H1 (cell line): ENCODE measurements at regions of chr17 and their contacts with region 1.

Region 1: DNA sequence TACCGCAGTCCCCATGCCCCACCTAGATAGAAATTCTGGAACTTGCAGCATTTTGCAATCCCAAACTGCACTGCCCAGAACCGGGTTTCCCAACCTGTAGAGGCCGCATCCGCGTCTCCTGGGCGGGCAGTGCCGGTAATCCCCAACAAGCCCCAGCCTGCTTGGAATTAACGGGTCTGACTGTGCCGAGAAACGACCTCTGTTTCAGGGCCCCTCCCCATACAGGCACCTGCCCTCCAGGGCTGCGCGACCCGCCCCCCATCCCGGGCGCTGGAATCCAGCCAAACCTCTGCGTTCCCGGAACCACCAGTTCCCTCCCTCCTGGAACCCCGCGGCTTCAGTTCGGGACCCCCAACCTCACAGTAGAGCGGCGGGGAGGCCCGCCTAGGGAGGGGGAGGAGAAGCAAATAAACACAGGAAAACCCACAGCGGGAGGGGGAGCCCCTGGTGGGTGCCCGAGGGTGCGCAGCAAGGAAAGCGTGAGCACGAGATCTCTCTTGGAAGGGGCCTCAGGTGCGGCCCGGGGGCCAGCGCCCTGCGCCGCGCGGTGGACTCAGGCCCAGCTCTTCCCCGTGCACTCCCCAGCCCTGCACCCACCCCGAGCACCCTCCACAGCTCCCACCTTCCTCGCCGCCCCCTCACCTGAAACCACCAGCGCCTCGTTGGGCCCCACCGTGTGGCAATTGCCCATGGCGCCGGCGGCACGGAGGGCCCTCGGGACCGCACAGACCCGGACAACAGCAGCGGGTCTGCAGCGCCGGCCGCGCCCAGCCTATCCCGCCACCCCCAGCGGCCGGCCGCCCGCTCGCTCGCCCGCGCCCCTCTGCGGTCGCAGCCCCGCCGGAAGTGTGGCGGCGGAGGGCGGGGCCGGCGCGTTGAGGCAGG is at the start of gene FLOT2:
- DNase-seq: peak; percentile 38 to 83
- H3K4me3 ChIP-seq: peak within 1 kb of the TSS; percentile 79 to 94 (median 89)
- H3K27ac ChIP-seq: peak within 1 kb of the TSS; percentile 68; the same call in 1 of the 2 replicates
- H3K4me1 ChIP-seq: peaks cover 2 to 18% (median 8%) of the 10 kb centered on the region in 4 experiments
- H3K27me3 ChIP-seq: no peaks in the 10 kb centered on the region
- CTCF ChIP-seq: peak in 2 of 3 experiments; percentile 14 to 33; a peak in 3 of 4 replicates
- EP300 ChIP-seq: no peak; a peak in 1 of 3 replicates
- POLR2A ChIP-seq: peak; percentile 56 to 75; a peak in 2 of 3 replicates
- RAD21 ChIP-seq: no peak
- total RNA-seq, gene FLOT2: 116 and 121 TPM in 2 replicates

Region 2: DNA sequence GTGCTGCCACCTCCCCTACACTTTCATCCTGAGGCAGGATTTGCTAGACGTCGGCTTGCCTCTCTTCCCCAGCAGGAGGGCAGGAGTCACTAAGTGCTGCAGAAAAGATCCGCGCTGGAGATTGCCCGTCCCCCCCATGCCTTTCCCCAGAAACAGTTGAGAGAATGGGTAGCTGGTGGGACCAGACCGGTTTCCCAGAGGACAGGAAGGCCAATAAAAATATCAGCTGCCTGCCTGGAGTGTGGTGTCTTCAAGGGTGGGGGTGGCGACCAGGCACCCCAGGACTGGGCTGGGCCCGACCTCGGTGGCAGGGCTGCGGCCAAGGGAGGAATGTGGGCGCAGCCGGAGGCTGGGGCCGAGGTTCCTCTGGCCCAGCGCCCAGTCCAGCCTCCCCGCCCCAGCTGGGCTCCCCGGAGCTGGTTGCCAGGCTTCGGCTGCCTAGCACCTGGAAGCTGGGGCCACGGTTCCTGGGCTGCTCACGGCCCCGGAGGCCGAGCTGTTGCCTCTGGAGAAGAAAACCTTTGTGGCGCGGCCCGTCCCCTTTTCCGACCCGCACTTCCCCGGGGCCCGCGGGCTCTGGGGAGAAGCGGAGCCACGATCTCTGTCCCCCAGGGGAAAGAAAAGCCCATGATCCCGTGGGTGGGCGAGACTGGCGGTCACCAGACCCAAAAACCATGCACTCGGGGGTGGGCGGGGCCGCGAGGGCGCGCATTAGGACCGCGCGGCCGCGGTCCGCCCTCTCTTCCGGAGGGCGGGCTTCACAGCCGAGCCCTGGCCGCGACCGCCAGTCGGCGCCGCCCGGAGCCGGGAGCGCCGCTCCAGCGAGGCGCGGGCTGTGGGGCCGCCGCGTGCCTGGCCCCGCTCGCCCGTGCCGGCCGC is 153.7 kb before region 1 on chr17 and contains the start of gene TRAF4:
- CTCF ChIA-PET with region 1: interaction called, 3 read pairs
- POLR2A ChIA-PET with region 1: interaction called, 18 read pairs
- DNase-seq: peak in 1 of 2 experiments; percentile 87
- H3K4me3 ChIP-seq: peak within 1 kb of the TSS; percentile 94 to 99 (median 98)
- H3K27ac ChIP-seq: peak within 1 kb of the TSS; percentile 99
- H3K4me1 ChIP-seq: peaks cover 0 to 30% (median 24%) of the 10 kb centered on the region in 4 experiments; a peak in 6 of 7 replicates
- H3K27me3 ChIP-seq: no peaks in the 10 kb centered on the region
- CTCF ChIP-seq: peak in 2 of 3 experiments; percentile 8 to 17; a peak in 2 of 4 replicates
- EP300 ChIP-seq: no peak
- POLR2A ChIP-seq: peak; percentile 84 to 94; a peak in 2 of 3 replicates
- RAD21 ChIP-seq: no peak
- total RNA-seq, gene TRAF4: 167 TPM in 2 replicates

Region 3: DNA sequence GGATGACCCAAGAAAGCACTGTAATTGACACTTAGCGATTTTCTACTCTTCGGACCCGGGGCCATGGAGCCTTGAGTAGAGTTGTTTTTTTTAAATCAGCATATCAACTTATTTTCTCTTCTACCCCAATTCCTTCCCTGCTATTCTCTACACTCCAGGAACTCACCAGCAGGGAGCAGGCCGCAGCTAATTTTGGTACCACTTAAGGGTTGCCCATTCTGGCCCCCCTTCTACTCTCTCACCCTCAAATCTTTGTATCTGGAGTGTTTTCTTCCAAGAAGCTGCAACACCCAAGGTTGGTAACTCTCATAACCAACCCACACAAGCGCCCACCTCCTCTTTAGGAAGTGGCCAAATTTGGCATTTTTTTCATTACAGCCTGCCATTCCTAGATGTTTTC is 47.8 kb before region 1 on chr17:
- CTCF ChIA-PET with region 1: interaction called, 14 read pairs
- POLR2A ChIA-PET with region 1: interaction called, 3 read pairs
- DNase-seq: no peak
- H3K4me3 ChIP-seq: no peak overlapping the region
- H3K27ac ChIP-seq: no peak overlapping the region
- H3K4me1 ChIP-seq: no peaks in the 10 kb centered on the region; a peak in 1 of 7 replicates
- H3K27me3 ChIP-seq: no peaks in the 10 kb centered on the region
- CTCF ChIP-seq: peak; percentile 1 to 36 (median 26); a peak in 3 of 4 replicates
- EP300 ChIP-seq: no peak
- POLR2A ChIP-seq: no peak
- RAD21 ChIP-seq: peak; percentile 31 to 37

Region 4: GRCh38 chr17:28861393-28862203 is 35.5 kb before region 1 on chr17:
- CTCF ChIA-PET with region 1: interaction called, 15 read pairs
- POLR2A ChIA-PET with region 1: interaction called, 5 read pairs
- DNase-seq: no peak
- H3K4me3 ChIP-seq: 0 out of 8 replicates have a peak overlapping the region, but pooled peaks of 1 of the 4 experiments have one; percentile 33
- H3K27ac ChIP-seq: no peak overlapping the region
- H3K4me1 ChIP-seq: peaks cover 0 to 6% (median 0%) of the 10 kb centered on the region in 4 experiments; a peak in 2 of 7 replicates
- H3K27me3 ChIP-seq: no peaks in the 10 kb centered on the region
- CTCF ChIP-seq: no peak
- EP300 ChIP-seq: no peak
- POLR2A ChIP-seq: no peak
- RAD21 ChIP-seq: no peak

Region 5: GRCh38 chr17:28878981-28879380 is 18.1 kb before region 1 on chr17:
- CTCF ChIA-PET with region 1: interaction called, 16 read pairs
- POLR2A ChIA-PET with region 1: interaction called, 15 read pairs
- DNase-seq: peak; percentile 67 to 75
- H3K4me3 ChIP-seq: no peak overlapping the region
- H3K27ac ChIP-seq: no peak overlapping the region
- H3K4me1 ChIP-seq: no peaks in the 10 kb centered on the region; a peak in 3 of 7 replicates
- H3K27me3 ChIP-seq: no peaks in the 10 kb centered on the region; a peak in 1 of 7 replicates
- CTCF ChIP-seq: peak; percentile 81 to 96 (median 85)
- EP300 ChIP-seq: no peak
- POLR2A ChIP-seq: no peak
- RAD21 ChIP-seq: peak; percentile 90 to 94

Region 6: GRCh38 chr17:28908640-28909167 is 11.6 kb after region 1 on chr17:
- CTCF ChIA-PET with region 1: interaction called, 26 read pairs
- POLR2A ChIA-PET with region 1: interaction called, 12 read pairs
- DNase-seq: no peak
- H3K4me3 ChIP-seq: no peak overlapping the region
- H3K27ac ChIP-seq: no peak overlapping the region
- H3K4me1 ChIP-seq: peaks cover 0 to 6% (median 0%) of the 10 kb centered on the region in 4 experiments; a peak in 5 of 7 replicates
- H3K27me3 ChIP-seq: no peaks in the 10 kb centered on the region
- CTCF ChIP-seq: no peak
- EP300 ChIP-seq: no peak
- POLR2A ChIP-seq: no peak
- RAD21 ChIP-seq: no peak

Region 7: DNA sequence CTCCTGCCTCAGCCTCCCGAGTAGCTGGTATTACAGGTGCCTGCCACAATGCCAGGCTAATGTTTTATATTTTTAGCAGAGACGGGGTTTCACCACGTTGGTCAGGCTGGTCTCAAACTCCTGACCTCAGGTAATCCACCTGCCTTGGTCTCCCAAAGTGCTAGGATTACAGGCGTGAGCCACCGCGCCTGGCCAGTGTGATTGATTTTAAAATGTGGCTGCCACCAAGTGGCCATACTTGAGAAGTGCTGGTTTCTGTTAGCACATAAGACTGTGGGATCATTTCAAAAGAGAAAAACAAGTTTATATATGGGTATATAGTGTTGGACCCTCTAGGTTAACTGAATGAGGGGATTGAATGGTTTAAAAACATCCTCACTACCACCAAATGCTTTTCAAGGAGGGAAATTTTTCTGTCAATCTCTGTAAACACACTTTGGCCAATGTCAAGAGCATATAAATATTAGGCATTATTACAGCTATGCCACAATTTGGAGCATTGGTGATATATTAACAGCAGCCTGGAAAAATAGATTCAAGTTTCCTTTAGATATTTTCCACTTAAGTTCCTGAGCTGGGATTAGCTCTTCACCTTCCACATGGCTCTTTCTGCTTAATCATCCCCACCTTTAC is 19.3 kb after region 1 on chr17:
- CTCF ChIA-PET with region 1: interaction called, 26 read pairs
- POLR2A ChIA-PET with region 1: interaction called, 4 read pairs
- DNase-seq: no peak
- H3K4me3 ChIP-seq: no peak overlapping the region
- H3K27ac ChIP-seq: no peak overlapping the region
- H3K4me1 ChIP-seq: no peaks in the 10 kb centered on the region; a peak in 2 of 7 replicates
- H3K27me3 ChIP-seq: no peaks in the 10 kb centered on the region
- CTCF ChIP-seq: peak; percentile 30 to 61 (median 47)
- EP300 ChIP-seq: no peak
- POLR2A ChIP-seq: no peak
- RAD21 ChIP-seq: peak; percentile 33 to 51; a peak in 3 of 4 replicates

Region 8: GRCh38 chr17:29032857-29033197 is 135.7 kb after region 1 on chr17:
- CTCF ChIA-PET with region 1: no interaction called
- POLR2A ChIA-PET with region 1: no interaction called
- DNase-seq: no peak
- H3K4me3 ChIP-seq: peak overlapping the region in 2 of 4 experiments; percentile 32 to 47; a peak in 3 of 8 replicates
- H3K27ac ChIP-seq: peak overlapping the region; percentile 72; the same call in 1 of the 2 replicates
- H3K4me1 ChIP-seq: peaks cover 11 to 31% (median 22%) of the 10 kb centered on the region in 4 experiments
- H3K27me3 ChIP-seq: no peaks in the 10 kb centered on the region
- CTCF ChIP-seq: no peak
- EP300 ChIP-seq: peak in 1 of 2 experiments; percentile 64; a peak in 1 of 3 replicates
- POLR2A ChIP-seq: no peak; a peak in 1 of 3 replicates
- RAD21 ChIP-seq: no peak